ENCODE measurements at regions of chr1 and their contacts with region 1.

Region 1: DNA sequence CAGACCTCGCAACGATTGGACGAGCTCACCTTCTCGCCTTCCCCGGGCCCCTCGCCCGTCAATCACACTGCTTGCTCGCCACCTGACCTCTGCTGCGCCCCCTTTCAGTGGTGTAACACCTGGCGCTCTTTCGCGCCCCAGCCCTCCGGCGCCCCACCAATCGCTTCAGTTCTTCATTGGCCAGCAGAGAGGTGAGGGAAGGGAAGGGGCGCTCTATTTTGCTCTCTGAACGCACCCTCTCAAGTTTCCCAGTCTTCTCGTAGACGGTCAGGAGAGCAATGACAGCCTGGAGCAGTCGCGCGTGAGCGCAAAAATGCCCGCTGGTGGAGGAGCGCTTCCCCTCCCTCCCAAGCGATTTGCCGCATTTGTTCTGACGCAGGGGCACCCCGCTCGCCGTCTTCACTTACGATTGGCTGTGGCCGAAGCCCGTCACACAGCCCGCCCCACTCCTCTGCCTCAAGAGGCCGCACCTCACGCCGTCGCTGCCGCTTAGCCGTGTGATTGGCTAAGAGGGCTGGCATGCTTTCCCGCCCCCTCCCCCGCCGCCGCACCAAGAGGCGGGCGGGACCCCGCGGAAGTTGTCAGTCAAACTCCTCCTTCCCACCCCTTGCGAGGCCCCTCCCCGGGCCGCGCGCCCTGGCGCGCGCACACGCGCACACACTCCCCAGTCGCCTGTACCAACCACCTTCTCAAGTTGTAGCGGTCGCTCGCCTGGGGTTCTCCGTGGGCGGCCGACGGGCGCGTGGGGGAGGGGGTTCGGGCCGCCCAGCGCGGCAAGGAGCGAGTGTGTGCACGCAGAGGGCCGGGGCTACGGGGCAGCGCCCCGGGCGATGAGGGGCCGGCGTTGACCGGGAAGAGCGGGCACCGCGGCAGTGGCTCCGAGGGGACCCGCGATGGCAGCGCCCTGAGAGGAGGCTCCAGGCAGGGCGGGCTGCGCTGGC is at the start of gene PPP2R5A:
- DNase-seq: peak; percentile 95 to 99 (median 99)
- ATAC-seq: peak; percentile 92
- H3K4me3 ChIP-seq: peak within 1 kb of the TSS; percentile 96
- H3K4me3 Mint-ChIP-seq: peak within 1 kb of the TSS; percentile 94 to 100 (median 98)
- H3K27ac ChIP-seq: peak within 1 kb of the TSS; percentile 96
- H3K27ac Mint-ChIP-seq: peak within 1 kb of the TSS; percentile 96 to 99 (median 98)
- H3K4me1 ChIP-seq: peaks cover 19 to 26% of the 10 kb centered on the region in 2 donors
- H3K4me1 Mint-ChIP-seq: peaks cover 21 to 49% (median 43%) of the 10 kb centered on the region in 7 donors
- H3K27me3 ChIP-seq: no peaks in the 10 kb centered on the region
- H3K27me3 Mint-ChIP-seq: peaks cover 0 to 6% (median 0%) of the 10 kb centered on the region in 5 donors
- total RNA-seq, gene PPP2R5A: 38.5 to 52.7 (median 49.8) TPM

Region 2: DNA sequence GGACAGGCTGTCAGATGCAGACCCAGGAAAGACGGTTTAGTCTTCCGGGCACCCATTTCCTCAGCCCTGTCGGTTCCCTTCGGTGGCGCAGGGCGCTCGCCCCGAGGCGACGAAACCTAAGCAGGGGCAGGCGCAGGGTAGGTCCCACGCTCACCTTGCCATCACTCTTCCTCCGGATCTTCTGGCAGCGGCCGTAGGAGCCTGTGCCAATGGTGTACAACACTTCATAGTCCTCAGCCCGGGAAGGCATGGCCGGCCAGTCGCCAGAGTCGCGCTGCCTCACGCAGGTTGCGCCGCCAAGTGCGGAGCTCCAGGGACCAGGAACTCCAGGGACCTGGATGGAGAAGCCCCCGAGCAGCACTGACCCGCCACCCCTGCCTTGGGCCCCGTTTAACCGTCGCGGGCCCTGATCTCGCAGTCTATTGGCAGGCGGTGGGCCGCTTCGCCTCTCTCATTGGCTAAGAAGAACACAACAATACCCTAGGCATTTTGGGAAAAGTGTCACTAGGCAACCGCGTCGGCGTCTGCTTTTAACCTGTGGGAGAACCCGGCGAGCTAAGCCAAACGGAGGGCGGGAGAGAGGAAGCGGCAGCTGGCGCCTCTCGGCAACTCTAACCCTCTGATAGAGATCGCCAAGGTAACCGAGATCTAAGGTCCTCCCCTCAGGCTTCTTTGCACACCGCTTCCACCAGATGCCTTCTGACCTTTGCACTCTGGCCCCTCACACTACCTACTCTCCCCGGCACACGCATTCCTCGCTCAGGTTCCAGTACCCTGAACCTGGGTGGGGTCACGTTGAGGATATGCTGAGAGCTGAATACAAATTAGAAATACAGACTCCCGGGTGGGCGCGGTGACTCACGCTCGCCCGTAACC is 609.5 kb before region 1 on chr1 and contains the start of gene NEK2:
- CTCF ChIA-PET with region 1: interaction called, 3 read pairs
- POLR2A ChIA-PET with region 1: no interaction called
- intact Hi-C with region 1: loop called (anchors 1 to 2 kb)
- DNase-seq: peak; percentile 53 to 90 (median 85)
- ATAC-seq: peak; percentile 97
- H3K4me3 ChIP-seq: peak within 1 kb of the TSS; percentile 76
- H3K4me3 Mint-ChIP-seq: peak within 1 kb of the TSS; percentile 88 to 96 (median 92)
- H3K27ac ChIP-seq: peak within 1 kb of the TSS; percentile 56
- H3K27ac Mint-ChIP-seq: peak within 1 kb of the TSS; percentile 45 to 88 (median 80)
- H3K4me1 ChIP-seq: peaks cover 5 to 7% of the 10 kb centered on the region in 2 donors
- H3K4me1 Mint-ChIP-seq: peaks cover 8 to 38% (median 13%) of the 10 kb centered on the region in 7 donors
- H3K27me3 ChIP-seq: no peaks in the 10 kb centered on the region
- H3K27me3 Mint-ChIP-seq: no peaks in the 10 kb centered on the region
- total RNA-seq, gene NEK2: 0.16 to 26.5 (median 0.25) TPM in 4 of 5 experiments, not detected in the other

Region 3: GRCh38 chr1:212035123-212035834 is 249.7 kb before region 1 on chr1 and contains the starts of genes DTL and INTS7:
- CTCF ChIA-PET with region 1: interaction called, 5 read pairs
- POLR2A ChIA-PET with region 1: interaction called, 29 read pairs
- intact Hi-C with region 1: loop called (anchors 1 kb)
- DNase-seq: peak; percentile 94 to 99 (median 99)
- ATAC-seq: peak; percentile 93
- H3K4me3 ChIP-seq: peak within 1 kb of the TSS; percentile 99
- H3K4me3 Mint-ChIP-seq: peak within 1 kb of the TSS; percentile 86 to 100 (median 98)
- H3K27ac ChIP-seq: peak within 1 kb of the TSS; percentile 70
- H3K27ac Mint-ChIP-seq: peak within 1 kb of the TSS; percentile 95 to 99 (median 98)
- H3K4me1 ChIP-seq: peaks cover 20 to 23% of the 10 kb centered on the region in 2 donors
- H3K4me1 Mint-ChIP-seq: peaks cover 18 to 68% (median 54%) of the 10 kb centered on the region in 7 donors
- H3K27me3 ChIP-seq: no peaks in the 10 kb centered on the region
- H3K27me3 Mint-ChIP-seq: peaks cover 0 to 5% (median 0%) of the 10 kb centered on the region in 5 donors
- total RNA-seq, gene DTL: 0.27 to 63.0 (median 0.78) TPM
- total RNA-seq, gene INTS7: 7.3 to 33.5 (median 8.6) TPM

Region 4: GRCh38 chr1:212229654-212230053 is 55.4 kb before region 1 on chr1:
- CTCF ChIA-PET with region 1: no interaction called
- POLR2A ChIA-PET with region 1: interaction called, 4 read pairs
- intact Hi-C with region 1: loop called in 1 of 2 experiments (anchors 1 kb)
- DNase-seq: no peak
- ATAC-seq: no peak
- H3K4me3 ChIP-seq: no peak overlapping the region
- H3K4me3 Mint-ChIP-seq: no peak overlapping the region
- H3K27ac ChIP-seq: no peak overlapping the region
- H3K27ac Mint-ChIP-seq: peak overlapping the region in 1 of 9 donors; percentile 12
- H3K4me1 ChIP-seq: peaks cover 14 to 23% of the 10 kb centered on the region in 2 donors
- H3K4me1 Mint-ChIP-seq: peaks cover 19 to 53% (median 29%) of the 10 kb centered on the region in 7 donors
- H3K27me3 ChIP-seq: no peaks in the 10 kb centered on the region
- H3K27me3 Mint-ChIP-seq: no peaks in the 10 kb centered on the region

Region 5: DNA sequence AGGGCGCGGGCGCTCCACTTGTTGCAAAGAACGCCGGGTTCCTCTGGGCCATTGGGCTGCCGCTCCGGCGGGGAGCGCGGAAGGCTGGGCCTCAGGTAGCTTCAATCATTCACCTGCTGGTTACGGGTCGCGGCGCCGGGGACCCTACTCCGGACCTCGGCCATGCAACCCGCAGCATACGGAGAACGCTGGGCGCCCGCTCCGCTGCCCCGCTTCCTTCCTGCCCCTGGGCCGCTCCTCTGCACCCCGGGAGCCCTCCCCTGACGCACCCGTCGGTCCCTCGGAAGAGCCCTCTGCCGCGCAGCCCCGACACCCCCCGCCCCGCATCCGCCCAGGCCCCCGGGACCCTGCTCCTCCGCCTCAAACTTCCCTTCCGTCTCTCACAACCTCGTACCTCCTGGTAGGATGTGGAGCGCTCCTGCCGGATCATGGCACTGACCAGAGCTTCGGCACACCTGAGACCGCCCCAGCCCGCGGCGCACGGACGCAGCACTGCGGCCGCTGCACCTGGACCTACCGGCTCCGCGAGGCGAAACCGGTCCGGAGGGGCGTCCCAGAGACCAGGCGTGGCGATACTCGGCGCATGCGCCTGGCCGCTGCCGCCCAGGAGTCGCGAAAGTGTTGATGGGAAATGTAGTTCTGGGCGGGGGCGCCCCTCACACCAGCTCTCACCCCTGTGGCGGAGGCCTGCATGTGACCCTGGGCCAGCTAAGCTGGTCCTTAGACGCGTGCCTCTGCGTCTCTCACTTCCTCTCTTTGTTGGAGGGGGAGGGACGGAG is 129.5 kb after region 1 on chr1 and contains the start of gene PACC1:
- CTCF ChIA-PET with region 1: no interaction called
- POLR2A ChIA-PET with region 1: interaction called, 10 read pairs
- intact Hi-C with region 1: loop called (anchors 1 kb)
- DNase-seq: peak; percentile 77 to 89 (median 86)
- ATAC-seq: peak; percentile 98
- H3K4me3 ChIP-seq: peak within 1 kb of the TSS; percentile 98
- H3K4me3 Mint-ChIP-seq: peak within 1 kb of the TSS; percentile 87 to 100 (median 94)
- H3K27ac ChIP-seq: peak within 1 kb of the TSS; percentile 71
- H3K27ac Mint-ChIP-seq: peak within 1 kb of the TSS; percentile 74 to 94 (median 89)
- H3K4me1 ChIP-seq: peaks cover 15 to 19% of the 10 kb centered on the region in 2 donors
- H3K4me1 Mint-ChIP-seq: peaks cover 22 to 46% (median 40%) of the 10 kb centered on the region in 7 donors
- H3K27me3 ChIP-seq: no peaks in the 10 kb centered on the region
- H3K27me3 Mint-ChIP-seq: no peaks in the 10 kb centered on the region
- total RNA-seq, gene PACC1: 7.9 to 13.4 (median 12.0) TPM

Region 6: GRCh38 chr1:212514056-212514614 is 229.1 kb after region 1 on chr1:
- CTCF ChIA-PET with region 1: no interaction called
- POLR2A ChIA-PET with region 1: no interaction called
- intact Hi-C with region 1: no loop called
- DNase-seq: peak in 2 of 9 donors; percentile 8 to 14
- ATAC-seq: peak; percentile 34
- H3K4me3 ChIP-seq: no peak overlapping the region
- H3K4me3 Mint-ChIP-seq: peak overlapping the region in 8 of 10 donors; percentile 29 to 78 (median 56)
- H3K27ac ChIP-seq: no peak overlapping the region
- H3K27ac Mint-ChIP-seq: no peak overlapping the region
- H3K4me1 ChIP-seq: peaks cover 0 to 8% of the 10 kb centered on the region in 2 donors
- H3K4me1 Mint-ChIP-seq: peaks cover 1 to 13% (median 6%) of the 10 kb centered on the region in 7 donors
- H3K27me3 ChIP-seq: peaks cover 0 to 7% of the 10 kb centered on the region in 2 donors
- H3K27me3 Mint-ChIP-seq: peaks cover 50 to 76% (median 57%) of the 10 kb centered on the region in 5 donors

Region 7: GRCh38 chr1:212699104-212699624 is 414.1 kb after region 1 on chr1:
- CTCF ChIA-PET with region 1: no interaction called
- POLR2A ChIA-PET with region 1: no interaction called
- intact Hi-C with region 1: loop called in 1 of 2 experiments (anchors 1 kb)
- DNase-seq: peak; percentile 11 to 69 (median 40)
- ATAC-seq: peak; percentile 79
- H3K4me3 ChIP-seq: peak overlapping the region; percentile 56
- H3K4me3 Mint-ChIP-seq: peak overlapping the region; percentile 79 to 90 (median 85)
- H3K27ac ChIP-seq: no peak overlapping the region
- H3K27ac Mint-ChIP-seq: peak overlapping the region in 7 of 9 donors; percentile 7 to 68 (median 47)
- H3K4me1 ChIP-seq: peaks cover 9 to 20% of the 10 kb centered on the region in 2 donors
- H3K4me1 Mint-ChIP-seq: peaks cover 28 to 53% (median 46%) of the 10 kb centered on the region in 7 donors
- H3K27me3 ChIP-seq: no peaks in the 10 kb centered on the region
- H3K27me3 Mint-ChIP-seq: peaks cover 0 to 31% (median 5%) of the 10 kb centered on the region in 5 donors

Region 8: GRCh38 chr1:212938846-212939245 is 653.8 kb after region 1 on chr1:
- CTCF ChIA-PET with region 1: no interaction called
- POLR2A ChIA-PET with region 1: no interaction called
- intact Hi-C with region 1: no loop called
- DNase-seq: no peak
- ATAC-seq: no peak
- H3K4me3 ChIP-seq: no peak overlapping the region
- H3K4me3 Mint-ChIP-seq: no peak overlapping the region
- H3K27ac ChIP-seq: no peak overlapping the region
- H3K27ac Mint-ChIP-seq: no peak overlapping the region
- H3K4me1 ChIP-seq: no peaks in the 10 kb centered on the region
- H3K4me1 Mint-ChIP-seq: peaks cover 0 to 2% (median 0%) of the 10 kb centered on the region in 7 donors
- H3K27me3 ChIP-seq: no peaks in the 10 kb centered on the region
- H3K27me3 Mint-ChIP-seq: peaks cover 5 to 17% (median 7%) of the 10 kb centered on the region in 5 donors

Region 9: DNA sequence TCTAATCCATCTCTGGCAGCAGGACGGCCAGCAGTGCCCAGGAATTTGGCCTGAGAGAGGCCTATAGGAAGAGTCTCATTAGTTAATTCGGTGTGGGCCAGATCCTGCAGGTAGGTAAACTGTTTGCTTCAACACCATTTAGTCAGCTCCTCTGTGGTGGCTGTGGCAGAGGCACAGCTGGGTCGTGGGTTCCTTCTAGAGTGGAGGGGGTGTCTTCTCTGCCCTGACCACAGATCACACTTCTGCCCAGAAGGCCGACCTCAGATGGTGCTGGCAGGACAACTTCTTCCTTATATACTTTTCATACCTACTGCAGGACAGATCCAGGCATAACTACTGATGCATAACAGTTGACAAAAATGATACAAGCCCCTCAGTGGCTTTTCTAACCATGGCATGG is 1047.5 kb after region 1 on chr1:
- CTCF ChIA-PET with region 1: no interaction called
- POLR2A ChIA-PET with region 1: no interaction called
- intact Hi-C with region 1: no loop called
- DNase-seq: no peak
- ATAC-seq: no peak
- H3K4me3 ChIP-seq: no peak overlapping the region
- H3K4me3 Mint-ChIP-seq: no peak overlapping the region
- H3K27ac ChIP-seq: no peak overlapping the region
- H3K27ac Mint-ChIP-seq: no peak overlapping the region
- H3K4me1 ChIP-seq: no peaks in the 10 kb centered on the region
- H3K4me1 Mint-ChIP-seq: peaks cover 0 to 1% (median 0%) of the 10 kb centered on the region in 7 donors
- H3K27me3 ChIP-seq: no peaks in the 10 kb centered on the region
- H3K27me3 Mint-ChIP-seq: peaks cover 0 to 14% (median 7%) of the 10 kb centered on the region in 5 donors

Measured in naive thymus-derived CD4-positive, alpha-beta T cell (primary cell).